Activated CD4-positive, alpha-beta T cell treated with anti-CD3 and anti-CD28 coated beads, Interleukin-2, amount 10 ng/mL, durations not matched to agents 24 days and 14 days (primary cell): ENCODE measurements at regions of chrX and their contacts with region 1.

Region 1: GRCh38 chrX:71181910-71182799 is 37.5 kb downstream of the NLGN3 start:
- DNase-seq: peak; percentile 95
- H3K4me3 Mint-ChIP-seq: peak overlapping the region; percentile 88
- H3K27ac Mint-ChIP-seq: peak overlapping the region; percentile 97
- H3K4me1 Mint-ChIP-seq: peaks cover 18% of the 10 kb centered on the region
- H3K27me3 Mint-ChIP-seq: no peaks in the 10 kb centered on the region

Region 2: DNA sequence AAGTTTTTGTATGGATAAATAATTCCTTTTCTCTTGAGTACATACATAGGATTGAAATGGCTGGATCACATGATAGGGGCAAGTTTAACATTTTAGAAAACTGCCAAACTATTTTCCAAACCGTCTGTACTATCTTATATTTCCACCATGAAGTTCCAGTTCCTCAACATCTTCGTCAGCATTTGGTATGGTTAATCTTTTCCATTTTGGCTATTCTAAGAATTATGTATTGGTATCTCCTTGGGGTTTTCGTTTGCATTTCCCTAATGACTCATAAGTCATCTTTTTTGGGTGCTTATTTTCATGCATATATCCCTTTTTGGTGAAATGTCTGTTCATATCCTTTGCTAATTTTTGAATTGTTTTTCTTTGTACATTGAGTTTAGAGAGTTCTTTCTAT is 509.8 kb before region 1 on chrX:
- intact Hi-C with region 1: loop called (anchors 10 kb)
- DNase-seq: no peak
- H3K4me3 Mint-ChIP-seq: no peak overlapping the region
- H3K27ac Mint-ChIP-seq: peak overlapping the region; percentile 90
- H3K4me1 Mint-ChIP-seq: peaks cover 13% of the 10 kb centered on the region
- H3K27me3 Mint-ChIP-seq: no peaks in the 10 kb centered on the region

Region 3: GRCh38 chrX:70769659-70770232 is 412.4 kb before region 1 on chrX:
- intact Hi-C with region 1: loop called (anchors 10 kb)
- DNase-seq: no peak
- H3K4me3 Mint-ChIP-seq: no peak overlapping the region
- H3K27ac Mint-ChIP-seq: no peak overlapping the region
- H3K4me1 Mint-ChIP-seq: no peaks in the 10 kb centered on the region
- H3K27me3 Mint-ChIP-seq: peaks cover 2% of the 10 kb centered on the region

Region 4: GRCh38 chrX:70970482-70970995 is 211.6 kb before region 1 on chrX:
- intact Hi-C with region 1: loop called (anchors 5 kb)
- DNase-seq: peak; percentile 49
- H3K4me3 Mint-ChIP-seq: peak overlapping the region; percentile 17
- H3K27ac Mint-ChIP-seq: no peak overlapping the region
- H3K4me1 Mint-ChIP-seq: no peaks in the 10 kb centered on the region
- H3K27me3 Mint-ChIP-seq: peaks cover 2% of the 10 kb centered on the region

Region 5: GRCh38 chrX:71095543-71095911 is 86.6 kb before region 1 on chrX and contains the start of gene FOXO4:
- intact Hi-C with region 1: loop called (anchors 1 kb)
- DNase-seq: peak; percentile 96
- H3K4me3 Mint-ChIP-seq: peak within 1 kb of the TSS; percentile 89
- H3K27ac Mint-ChIP-seq: peak within 1 kb of the TSS; percentile 96
- H3K4me1 Mint-ChIP-seq: peaks cover 27% of the 10 kb centered on the region
- H3K27me3 Mint-ChIP-seq: no peaks in the 10 kb centered on the region
- total RNA-seq, gene FOXO4: 9.4 and 9.8 TPM in 2 replicates

Region 6: DNA sequence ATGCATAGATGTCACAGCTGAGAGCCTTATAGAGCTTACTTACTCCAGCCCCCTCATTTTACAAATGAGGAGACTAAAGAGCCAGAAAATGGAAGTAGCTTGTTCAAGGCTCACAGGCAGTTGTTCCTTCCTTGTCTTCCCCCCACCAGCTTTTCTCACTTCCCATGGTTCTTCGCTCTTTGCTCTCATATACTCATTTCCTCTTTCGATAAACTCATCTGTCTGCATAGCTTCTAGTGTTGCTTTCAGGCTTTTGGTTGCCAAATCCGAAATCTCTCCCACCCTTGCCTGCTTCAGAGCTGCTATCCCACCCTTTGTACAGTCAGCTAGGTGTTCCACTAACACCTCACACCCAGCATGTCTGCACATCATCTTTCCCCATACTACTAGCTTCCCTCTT is 15.9 kb after region 1 on chrX:
- intact Hi-C with region 1: loop called (anchors 1 kb)
- DNase-seq: peak; percentile 67
- H3K4me3 Mint-ChIP-seq: peak overlapping the region; percentile 91
- H3K27ac Mint-ChIP-seq: peak overlapping the region; percentile 88
- H3K4me1 Mint-ChIP-seq: peaks cover 18% of the 10 kb centered on the region
- H3K27me3 Mint-ChIP-seq: no peaks in the 10 kb centered on the region

Region 7: GRCh38 chrX:71254092-71254941 is 72.2 kb after region 1 on chrX and contains the start of gene ZMYM3:
- intact Hi-C with region 1: loop called (anchors 5 kb)
- DNase-seq: peak; percentile 92
- H3K4me3 Mint-ChIP-seq: peak within 1 kb of the TSS; percentile 93
- H3K27ac Mint-ChIP-seq: peak within 1 kb of the TSS; percentile 88
- H3K4me1 Mint-ChIP-seq: peaks cover 28% of the 10 kb centered on the region
- H3K27me3 Mint-ChIP-seq: peaks cover 2% of the 10 kb centered on the region
- total RNA-seq, gene ZMYM3: 16.9 and 20.1 TPM in 2 replicates